Naive thymus-derived CD8-positive, alpha-beta T cell (primary cell): ENCODE measurements at regions of chr17 and their contacts with region 1.

Region 1: GRCh38 chr17:28951991-28952975 is 965 bp upstream of the PHF12 start:
- DNase-seq: peak; percentile 85 to 99 (median 97)
- ATAC-seq: peak; percentile 71 to 77
- H3K4me3 Mint-ChIP-seq: no peak overlapping the region
- H3K27ac Mint-ChIP-seq: no peak overlapping the region
- H3K4me1 Mint-ChIP-seq: peaks cover 12 to 18% (median 16%) of the 10 kb centered on the region in 4 donors
- H3K27me3 Mint-ChIP-seq: no peaks in the 10 kb centered on the region

Region 2: GRCh38 chr17:28335201-28335955 is 616.9 kb before region 1 on chr17 and contains the starts of genes IFT20 and TNFAIP1:
- POLR2A ChIA-PET with region 1: interaction called, 15 read pairs
- DNase-seq: peak; percentile 89 to 99 (median 98)
- ATAC-seq: peak; percentile 94
- H3K4me3 Mint-ChIP-seq: peak within 1 kb of the TSS; percentile 93 to 99 (median 98)
- H3K27ac Mint-ChIP-seq: peak within 1 kb of the TSS; percentile 83 to 99 (median 97)
- H3K4me1 Mint-ChIP-seq: peaks cover 29 to 64% (median 56%) of the 10 kb centered on the region in 4 donors
- H3K27me3 Mint-ChIP-seq: no peaks in the 10 kb centered on the region
- polyA plus RNA-seq, gene IFT20: 44.1 to 56.6 (median 54.0) TPM
- polyA plus RNA-seq, gene TNFAIP1: 5.6 to 9.4 (median 7.1) TPM

Region 3: DNA sequence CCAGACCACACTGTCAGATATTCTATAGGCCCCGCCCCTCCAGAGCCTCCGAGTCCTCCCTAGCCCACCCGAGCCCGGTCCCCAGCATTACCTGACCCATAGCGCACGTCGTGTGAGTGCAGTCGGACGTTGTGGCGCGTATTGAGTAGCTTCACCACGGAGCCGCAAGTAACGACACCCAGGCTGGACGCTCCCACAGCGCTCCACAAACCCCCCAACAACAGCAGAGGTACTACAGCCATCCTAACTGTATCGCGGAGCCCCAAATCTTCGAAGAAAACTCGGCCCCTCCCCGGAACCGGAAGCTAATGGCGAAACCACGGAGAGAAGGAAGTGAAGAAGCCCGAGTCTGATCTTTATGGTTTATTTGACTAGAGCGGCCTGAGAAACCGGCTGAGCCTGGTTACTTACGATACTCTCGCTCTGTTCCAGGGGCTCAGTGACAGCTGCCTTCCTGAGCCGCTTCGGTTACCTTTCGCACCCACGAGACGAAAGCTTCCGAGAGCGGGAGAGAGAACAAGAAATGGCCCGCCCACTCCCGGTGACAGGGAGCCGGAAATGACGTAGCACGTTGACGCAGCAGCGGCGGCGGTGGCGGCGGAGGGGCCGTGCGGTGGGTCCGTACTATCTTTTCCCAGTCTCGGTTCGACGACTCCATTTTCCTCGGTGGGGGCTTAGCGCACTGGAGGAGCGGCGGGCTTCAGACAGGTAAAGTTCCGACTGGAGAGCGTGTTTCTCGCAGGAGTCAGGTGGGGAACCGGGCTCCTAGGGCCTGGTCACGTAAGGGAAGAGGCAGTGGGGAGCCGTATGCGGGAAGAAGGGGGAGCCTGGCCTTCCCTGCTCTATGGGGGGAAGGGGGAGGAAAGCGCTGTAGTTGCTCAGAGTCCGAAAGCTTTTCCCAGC is 290.4 kb before region 1 on chr17 and contains the starts of genes SDF2 and SUPT6H:
- POLR2A ChIA-PET with region 1: interaction called, 13 read pairs
- DNase-seq: peak; percentile 86 to 98 (median 94)
- ATAC-seq: peak; percentile 88 to 89
- H3K4me3 Mint-ChIP-seq: peak within 1 kb of the TSS; percentile 94 to 100 (median 100)
- H3K27ac Mint-ChIP-seq: peak within 1 kb of the TSS; percentile 99 to 100 (median 100)
- H3K4me1 Mint-ChIP-seq: peaks cover 30 to 70% (median 65%) of the 10 kb centered on the region in 4 donors
- H3K27me3 Mint-ChIP-seq: no peaks in the 10 kb centered on the region
- polyA plus RNA-seq, gene SDF2: 55.8 to 76.3 (median 59.0) TPM
- polyA plus RNA-seq, gene SUPT6H: 7.4 to 22.0 (median 10.0) TPM

Region 4: GRCh38 chr17:28720247-28720996 is 231.9 kb before region 1 on chr17:
- POLR2A ChIA-PET with region 1: interaction called, 112 read pairs
- DNase-seq: peak in 1 of 10 donors; percentile 39
- ATAC-seq: peak in 1 of 2 donors; percentile 0
- H3K4me3 Mint-ChIP-seq: peak overlapping the region; percentile 93 to 99 (median 98)
- H3K27ac Mint-ChIP-seq: peak overlapping the region; percentile 96 to 100 (median 98)
- H3K4me1 Mint-ChIP-seq: peaks cover 20 to 75% (median 56%) of the 10 kb centered on the region in 4 donors
- H3K27me3 Mint-ChIP-seq: peaks cover 0 to 20% (median 7%) of the 10 kb centered on the region in 5 donors

Region 5: DNA sequence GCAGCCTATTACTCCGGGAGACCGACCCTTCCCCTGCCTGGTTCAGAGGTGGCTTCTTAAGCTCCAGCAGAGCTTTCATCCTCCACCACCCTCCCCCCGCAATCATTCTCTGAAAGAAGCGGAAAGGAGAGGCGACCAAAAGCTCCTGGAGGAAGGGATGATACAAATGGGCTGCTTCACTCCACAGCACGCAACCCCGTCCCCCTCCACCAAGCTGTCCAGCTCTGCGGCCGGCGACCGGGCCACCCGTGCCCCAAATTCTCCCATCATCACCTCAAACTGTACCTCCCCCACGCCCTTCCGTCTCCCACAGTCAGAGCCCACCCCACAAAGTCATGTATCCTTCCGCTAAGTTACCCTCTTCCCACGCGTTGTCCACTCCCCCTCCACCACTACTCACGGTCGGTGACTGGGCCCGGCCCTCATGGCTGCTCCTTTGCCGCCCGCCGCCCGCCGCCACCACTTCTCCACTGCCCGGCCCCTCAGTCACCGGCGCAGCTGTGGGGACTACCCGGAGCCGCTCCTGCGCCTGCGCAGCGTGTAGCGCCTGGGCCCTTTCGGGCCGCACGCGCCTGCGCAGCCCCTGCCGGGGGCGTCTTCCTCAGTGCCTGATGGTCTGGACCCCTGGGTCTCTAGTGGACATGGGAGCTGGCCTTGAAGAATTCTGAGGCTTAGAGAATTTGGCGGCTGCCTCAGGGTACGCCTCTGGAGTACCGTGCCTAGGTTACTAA is 109.8 kb before region 1 on chr17 and contains the start of gene FAM222B:
- POLR2A ChIA-PET with region 1: interaction called, 10 read pairs
- DNase-seq: peak; percentile 77 to 90 (median 84)
- ATAC-seq: peak; percentile 97 to 98
- H3K4me3 Mint-ChIP-seq: peak within 1 kb of the TSS; percentile 94 to 100 (median 98)
- H3K27ac Mint-ChIP-seq: peak within 1 kb of the TSS; percentile 87 to 98 (median 96)
- H3K4me1 Mint-ChIP-seq: peaks cover 10 to 29% (median 24%) of the 10 kb centered on the region in 4 donors
- H3K27me3 Mint-ChIP-seq: peaks cover 0 to 2% (median 0%) of the 10 kb centered on the region in 5 donors
- polyA plus RNA-seq, gene FAM222B: 7.5 to 20.0 (median 9.2) TPM

Region 6: GRCh38 chr17:28902819-28903545 is 49.3 kb before region 1 on chr17 and contains the start of gene DHRS13:
- POLR2A ChIA-PET with region 1: interaction called, 64 read pairs
- DNase-seq: peak; percentile 90 to 99 (median 96)
- ATAC-seq: peak; percentile 89 to 90
- H3K4me3 Mint-ChIP-seq: peak within 1 kb of the TSS; percentile 82 to 95 (median 90)
- H3K27ac Mint-ChIP-seq: peak within 1 kb of the TSS; percentile 83 to 97 (median 90)
- H3K4me1 Mint-ChIP-seq: peaks cover 23 to 41% (median 39%) of the 10 kb centered on the region in 4 donors
- H3K27me3 Mint-ChIP-seq: no peaks in the 10 kb centered on the region
- polyA plus RNA-seq, gene DHRS13: 17.1 to 22.8 (median 19.4) TPM

Region 7: GRCh38 chr17:28937044-28937729 is 15.1 kb before region 1 on chr17:
- POLR2A ChIA-PET with region 1: interaction called, 24 read pairs
- DNase-seq: no peak
- ATAC-seq: no peak
- H3K4me3 Mint-ChIP-seq: peak overlapping the region in 1 of 10 donors; percentile 56
- H3K27ac Mint-ChIP-seq: peak overlapping the region in 6 of 10 donors; percentile 65 to 91 (median 79)
- H3K4me1 Mint-ChIP-seq: peaks cover 23 to 94% (median 84%) of the 10 kb centered on the region in 4 donors
- H3K27me3 Mint-ChIP-seq: no peaks in the 10 kb centered on the region